ENCODE measurements at regions of chr1 and their contacts with region 1.

Region 1: GRCh38 chr1:114979278-114979891 is 50.2 kb upstream of the TSHB start:
- DNase-seq: peak in 5 of 6 donors; percentile 25 to 70 (median 36)
- ATAC-seq: peak in 3 of 4 donors; percentile 65 to 72 (median 66)
- H3K4me3 ChIP-seq: no peak overlapping the region
- H3K27ac ChIP-seq: no peak overlapping the region
- H3K4me1 ChIP-seq: no peaks in the 10 kb centered on the region
- H3K27me3 ChIP-seq: peaks cover 0 to 4% (median 0%) of the 10 kb centered on the region in 4 donors
- CTCF ChIP-seq: peak; percentile 47 to 80 (median 70)

Region 2: DNA sequence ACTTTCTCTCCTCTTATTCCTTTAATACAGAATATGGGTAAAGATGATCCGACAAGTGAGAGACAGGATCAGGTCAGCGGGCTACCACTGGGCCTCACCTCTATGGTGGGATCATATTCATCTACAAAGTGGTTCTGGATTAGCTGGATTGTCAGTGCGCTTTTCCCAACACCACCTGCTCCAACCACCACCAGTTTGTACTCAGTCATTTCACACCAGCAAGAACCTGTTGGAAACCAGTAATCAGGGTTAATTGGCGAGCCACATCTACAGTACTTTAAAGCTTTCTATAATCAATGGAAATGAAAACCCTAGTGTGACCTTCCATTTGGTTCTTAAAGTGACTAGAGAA is 263.5 kb before region 1 on chr1:
- intact Hi-C with region 1: no loop called
- DNase-seq: no peak
- ATAC-seq: peak in 2 of 4 donors; percentile 4 to 13
- H3K4me3 ChIP-seq: peak overlapping the region; percentile 61 to 86 (median 74)
- H3K27ac ChIP-seq: peak overlapping the region; percentile 56 to 84 (median 77)
- H3K4me1 ChIP-seq: peaks cover 11 to 18% (median 16%) of the 10 kb centered on the region in 3 donors
- H3K27me3 ChIP-seq: no peaks in the 10 kb centered on the region
- CTCF ChIP-seq: no peak

Region 3: GRCh38 chr1:115052454-115053083 is 73.2 kb after region 1 on chr1:
- intact Hi-C with region 1: loop called in 1 of 3 experiments (anchors 10 kb)
- DNase-seq: peak in 4 of 6 donors; percentile 27 to 71 (median 41)
- ATAC-seq: peak; percentile 69 to 97 (median 96)
- H3K4me3 ChIP-seq: no peak overlapping the region
- H3K27ac ChIP-seq: no peak overlapping the region
- H3K4me1 ChIP-seq: no peaks in the 10 kb centered on the region
- H3K27me3 ChIP-seq: peaks cover 0 to 4% (median 0%) of the 10 kb centered on the region in 4 donors
- CTCF ChIP-seq: peak; percentile 60 to 87 (median 84)

Region 4: DNA sequence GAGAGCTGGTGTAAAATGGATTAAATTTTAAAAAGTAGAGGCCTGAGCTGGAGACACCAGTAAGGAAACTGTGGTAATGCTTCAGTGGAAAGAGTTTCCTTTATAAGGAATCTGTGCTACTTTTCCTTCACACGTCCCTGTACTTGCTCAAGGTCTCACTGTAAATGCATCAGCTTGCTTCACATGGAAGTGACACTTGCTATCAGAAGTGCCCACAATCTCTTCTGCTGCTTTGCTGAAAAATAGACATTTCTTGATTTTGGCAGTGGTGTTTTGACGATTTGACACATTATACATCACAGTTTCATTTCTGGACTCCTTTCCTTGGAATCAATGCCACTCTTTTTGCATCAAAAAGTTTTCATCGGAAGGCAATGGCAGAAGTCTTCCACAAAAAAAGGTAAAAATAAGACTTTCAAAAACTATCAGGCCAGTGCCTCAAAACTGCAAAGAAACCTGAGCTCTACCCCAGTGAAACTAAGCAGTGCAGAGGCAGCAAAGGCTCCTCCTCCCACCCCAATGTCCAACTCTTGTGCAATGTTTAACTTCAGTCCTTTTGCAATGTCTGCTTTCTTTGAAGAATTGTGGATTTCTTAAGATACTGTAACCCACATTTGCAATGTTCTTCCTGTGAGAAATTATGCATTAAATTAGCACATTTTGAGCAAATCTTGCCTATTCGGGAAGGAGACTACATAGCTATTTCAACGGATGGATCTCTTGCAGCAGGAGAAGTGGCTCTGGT is 128.3 kb after region 1 on chr1:
- intact Hi-C with region 1: loop called in 2 of 3 experiments (anchors 5 to 10 kb)
- DNase-seq: no peak
- ATAC-seq: peak in 2 of 4 donors; percentile 54 to 66
- H3K4me3 ChIP-seq: no peak overlapping the region
- H3K27ac ChIP-seq: no peak overlapping the region
- H3K4me1 ChIP-seq: no peaks in the 10 kb centered on the region
- H3K27me3 ChIP-seq: no peaks in the 10 kb centered on the region
- CTCF ChIP-seq: no peak

Region 5: GRCh38 chr1:115112496-115113375 is 133.4 kb after region 1 on chr1:
- intact Hi-C with region 1: loop called in 2 of 3 experiments (anchors 5 to 10 kb)
- DNase-seq: peak in 4 of 6 donors; percentile 22 to 75 (median 47)
- ATAC-seq: peak in 3 of 4 donors; percentile 58 to 80 (median 70)
- H3K4me3 ChIP-seq: no peak overlapping the region
- H3K27ac ChIP-seq: no peak overlapping the region
- H3K4me1 ChIP-seq: no peaks in the 10 kb centered on the region
- H3K27me3 ChIP-seq: no peaks in the 10 kb centered on the region
- CTCF ChIP-seq: peak; percentile 82 to 93 (median 92)

Region 6: DNA sequence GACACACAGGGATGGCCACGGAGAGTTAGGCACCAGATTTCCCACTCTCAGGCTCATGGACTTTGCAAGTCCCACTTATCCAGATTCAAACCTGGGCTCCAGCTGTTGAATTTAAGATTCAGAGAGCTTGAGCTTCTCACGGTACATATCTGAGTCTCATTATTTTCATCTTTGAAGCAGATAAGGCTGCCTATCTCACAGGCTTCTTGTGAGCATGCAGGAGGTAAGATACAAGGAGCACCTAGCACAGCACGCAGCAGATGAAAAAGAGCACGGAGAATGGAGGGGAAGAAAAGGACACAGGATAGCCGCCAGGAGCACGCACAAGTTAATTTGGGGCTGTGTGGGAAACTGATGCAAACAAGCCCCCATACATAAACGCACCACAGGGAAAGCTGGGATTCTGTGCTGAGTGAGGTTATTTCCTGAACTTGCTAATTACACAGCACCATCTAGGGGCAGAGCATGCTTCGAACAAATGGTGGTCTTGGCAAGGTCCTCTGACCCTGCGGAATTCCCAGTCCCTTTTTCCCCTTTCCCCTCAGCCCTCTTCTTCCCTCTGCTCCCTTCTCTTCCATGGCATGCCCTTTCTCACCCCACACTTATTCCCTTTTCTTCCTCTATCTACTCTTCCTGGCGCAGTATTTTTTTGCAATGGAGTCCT is 527.7 kb after region 1 on chr1:
- intact Hi-C with region 1: no loop called
- DNase-seq: no peak
- ATAC-seq: peak in 3 of 4 donors; percentile 52 to 71 (median 70)
- H3K4me3 ChIP-seq: no peak overlapping the region
- H3K27ac ChIP-seq: no peak overlapping the region
- H3K4me1 ChIP-seq: no peaks in the 10 kb centered on the region
- H3K27me3 ChIP-seq: no peaks in the 10 kb centered on the region
- CTCF ChIP-seq: peak in 2 of 4 donors; percentile 10 to 14

Region 7: DNA sequence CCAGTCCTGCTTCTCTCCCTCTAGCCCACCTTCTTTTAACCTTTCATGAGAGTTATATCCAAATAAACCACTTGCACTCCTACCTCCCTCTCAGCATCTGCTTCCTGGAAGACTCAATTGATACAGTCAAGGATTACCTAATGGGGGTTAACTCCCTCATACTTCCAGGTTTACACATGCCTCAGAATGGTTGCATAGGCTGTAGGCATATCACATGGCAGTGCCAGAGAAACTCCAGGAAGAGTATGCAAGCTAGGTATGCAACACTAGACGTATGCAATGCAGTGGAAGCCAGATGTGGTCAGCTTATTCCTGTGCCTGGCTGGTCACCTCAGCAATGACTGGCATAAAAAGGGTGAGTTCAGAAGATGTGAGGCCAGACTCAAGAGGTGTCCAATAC is 629.6 kb after region 1 on chr1:
- intact Hi-C with region 1: no loop called
- DNase-seq: no peak
- ATAC-seq: no peak
- H3K4me3 ChIP-seq: no peak overlapping the region
- H3K27ac ChIP-seq: no peak overlapping the region
- H3K4me1 ChIP-seq: no peaks in the 10 kb centered on the region
- H3K27me3 ChIP-seq: no peaks in the 10 kb centered on the region
- CTCF ChIP-seq: no peak